Caco-2 (cell line): ENCODE measurements at regions of chr17 and their contacts with region 1.

Region 1: GRCh38 chr17:7572588-7573323 is 6.7 kb upstream of the CD68 start:
- DNase-seq: peak; percentile 96
- H3K4me3 ChIP-seq: peak overlapping the region; percentile 98
- H3K4me3 Mint-ChIP-seq: peak overlapping the region; percentile 92
- H3K27ac Mint-ChIP-seq: peak overlapping the region; percentile 99
- H3K4me1 ChIP-seq: peaks cover 12% of the 10 kb centered on the region
- H3K4me1 Mint-ChIP-seq: peaks cover 1% of the 10 kb centered on the region
- H3K27me3 ChIP-seq: no peaks in the 10 kb centered on the region
- H3K27me3 Mint-ChIP-seq: no peaks in the 10 kb centered on the region
- CTCF ChIP-seq: no peak

Region 2: DNA sequence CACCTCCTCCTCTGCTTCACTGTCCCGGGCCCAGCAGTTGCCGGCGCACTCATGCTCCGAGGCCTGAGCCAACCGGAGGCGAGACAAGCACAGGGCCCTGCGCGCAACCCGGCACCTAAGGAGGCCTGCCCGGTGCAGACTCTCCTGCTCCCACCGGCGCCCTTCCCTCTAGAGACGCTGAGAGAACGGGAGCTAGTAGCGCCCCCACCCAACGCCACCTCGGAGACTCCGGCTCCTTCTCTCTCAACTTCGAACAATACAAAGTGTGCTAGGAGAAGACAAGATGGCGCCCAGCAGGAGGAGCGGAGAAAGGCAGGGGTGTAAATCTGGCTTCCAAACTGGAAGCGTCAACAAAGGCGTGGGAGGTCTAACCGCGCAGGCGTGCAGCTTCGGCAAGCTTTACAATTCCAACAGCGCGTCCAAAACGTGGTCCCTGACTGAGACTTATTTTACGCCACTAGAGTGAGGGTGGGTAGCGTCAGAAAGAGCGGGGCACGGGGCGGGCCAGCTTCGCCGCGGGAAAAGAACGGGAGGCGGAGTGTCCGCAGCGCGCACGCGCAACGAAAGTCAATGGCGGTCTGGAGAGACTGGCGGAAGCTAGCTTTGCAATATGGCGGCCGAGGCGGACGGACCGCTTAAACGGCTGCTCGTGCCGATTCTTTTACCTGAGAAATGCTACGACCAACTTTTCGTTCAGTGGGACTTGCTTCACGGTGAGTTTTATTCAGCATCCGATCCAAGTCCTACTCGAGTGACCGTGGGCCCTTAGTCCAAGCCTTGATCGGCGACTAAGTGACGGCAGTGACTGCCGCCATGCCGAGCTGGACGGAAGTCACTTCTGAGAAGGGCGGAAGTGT is 10.7 kb after region 1 on chr17 and contains the start of gene MPDU1:
- CTCF ChIA-PET with region 1: no interaction called
- POLR2A ChIA-PET with region 1: interaction called, 13 read pairs
- intact Hi-C with region 1: no loop called
- DNase-seq: peak; percentile 92 to 93
- H3K4me3 ChIP-seq: peak within 1 kb of the TSS; percentile 59
- H3K4me3 Mint-ChIP-seq: peak within 1 kb of the TSS; percentile 96
- H3K27ac Mint-ChIP-seq: peak within 1 kb of the TSS; percentile 100
- H3K4me1 ChIP-seq: peaks cover 10% of the 10 kb centered on the region
- H3K4me1 Mint-ChIP-seq: peaks cover 25% of the 10 kb centered on the region
- H3K27me3 ChIP-seq: no peaks in the 10 kb centered on the region
- H3K27me3 Mint-ChIP-seq: no peaks in the 10 kb centered on the region
- CTCF ChIP-seq: no peak
- total RNA-seq, gene MPDU1: 44.2 and 49.7 TPM in 2 replicates

Region 3: GRCh38 chr17:7700510-7700909 is 127.8 kb after region 1 on chr17:
- CTCF ChIA-PET with region 1: no interaction called
- POLR2A ChIA-PET with region 1: no interaction called
- intact Hi-C with region 1: no loop called
- DNase-seq: no peak
- H3K4me3 ChIP-seq: no peak overlapping the region
- H3K4me3 Mint-ChIP-seq: no peak overlapping the region
- H3K27ac Mint-ChIP-seq: no peak overlapping the region
- H3K4me1 ChIP-seq: no peaks in the 10 kb centered on the region
- H3K4me1 Mint-ChIP-seq: no peaks in the 10 kb centered on the region
- H3K27me3 ChIP-seq: no peaks in the 10 kb centered on the region
- H3K27me3 Mint-ChIP-seq: no peaks in the 10 kb centered on the region
- CTCF ChIP-seq: no peak

Region 4: DNA sequence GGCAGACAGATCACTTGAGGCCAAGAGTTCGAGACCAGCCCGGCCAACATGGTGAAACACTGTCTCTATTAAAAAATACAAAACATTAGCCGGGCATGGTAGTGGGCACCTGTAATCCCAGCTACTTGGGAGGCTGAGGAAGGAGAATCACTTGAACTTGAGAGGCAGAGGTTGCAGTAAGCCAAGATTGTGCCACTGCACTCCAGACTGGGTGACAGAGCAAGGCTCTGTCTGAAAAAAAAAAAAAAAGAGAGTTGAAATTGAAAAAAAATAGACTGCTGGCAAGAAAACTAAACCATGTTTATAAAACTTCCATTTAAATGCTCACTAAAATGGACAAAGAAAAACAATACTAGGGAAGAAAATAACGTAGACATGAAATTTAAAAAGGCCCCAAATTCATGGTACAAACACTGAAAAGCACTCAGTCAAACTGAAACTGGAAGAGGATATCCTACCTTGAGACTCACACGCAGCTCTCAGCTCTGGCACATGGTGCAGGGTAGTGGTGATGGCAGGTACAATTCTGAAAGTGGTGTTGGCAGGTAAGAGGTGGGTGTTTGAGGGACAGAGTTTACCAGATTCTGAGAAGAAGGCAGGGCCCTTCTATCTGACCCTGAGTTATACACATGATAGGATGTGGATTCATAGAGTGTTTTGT is 378.5 kb after region 1 on chr17:
- CTCF ChIA-PET with region 1: no interaction called
- POLR2A ChIA-PET with region 1: interaction called, 13 read pairs
- intact Hi-C with region 1: no loop called
- DNase-seq: no peak
- H3K4me3 ChIP-seq: no peak overlapping the region
- H3K4me3 Mint-ChIP-seq: no peak overlapping the region
- H3K27ac Mint-ChIP-seq: no peak overlapping the region
- H3K4me1 ChIP-seq: no peaks in the 10 kb centered on the region
- H3K4me1 Mint-ChIP-seq: no peaks in the 10 kb centered on the region
- H3K27me3 ChIP-seq: no peaks in the 10 kb centered on the region
- H3K27me3 Mint-ChIP-seq: no peaks in the 10 kb centered on the region
- CTCF ChIP-seq: no peak